CD8-positive, alpha-beta T cell (primary cell): ENCODE measurements at regions of chr3 and their contacts with region 1.

Region 1: DNA sequence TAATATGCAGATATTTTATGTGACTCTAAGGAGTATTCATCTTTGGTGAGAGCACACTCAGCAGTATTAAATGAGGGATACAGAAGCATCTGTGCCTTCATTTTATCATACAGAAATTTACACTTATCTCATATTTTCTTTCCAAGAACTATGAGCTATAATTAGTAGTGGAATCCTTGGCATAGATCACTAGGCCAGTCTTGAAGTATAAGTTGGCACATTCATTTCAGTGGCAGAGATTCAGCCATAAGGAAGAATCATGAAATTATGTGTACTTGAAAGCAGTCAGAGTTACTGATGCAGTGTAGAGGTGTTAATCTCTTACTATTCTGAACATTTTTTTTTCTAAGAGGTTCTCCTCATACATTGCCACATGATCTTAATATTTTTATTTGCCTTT is 393.6 kb upstream of the GOLIM4 start:
- DNase-seq: no peak
- ATAC-seq: no peak
- H3K4me3 ChIP-seq: no peak overlapping the region
- H3K4me3 Mint-ChIP-seq: no peak overlapping the region
- H3K27ac ChIP-seq: no peak overlapping the region
- H3K27ac Mint-ChIP-seq: no peak overlapping the region
- H3K4me1 ChIP-seq: no peaks in the 10 kb centered on the region
- H3K4me1 Mint-ChIP-seq: no peaks in the 10 kb centered on the region
- H3K27me3 ChIP-seq: no peaks in the 10 kb centered on the region
- H3K27me3 Mint-ChIP-seq: no peaks in the 10 kb centered on the region
- CTCF ChIP-seq: no peak

Region 2: DNA sequence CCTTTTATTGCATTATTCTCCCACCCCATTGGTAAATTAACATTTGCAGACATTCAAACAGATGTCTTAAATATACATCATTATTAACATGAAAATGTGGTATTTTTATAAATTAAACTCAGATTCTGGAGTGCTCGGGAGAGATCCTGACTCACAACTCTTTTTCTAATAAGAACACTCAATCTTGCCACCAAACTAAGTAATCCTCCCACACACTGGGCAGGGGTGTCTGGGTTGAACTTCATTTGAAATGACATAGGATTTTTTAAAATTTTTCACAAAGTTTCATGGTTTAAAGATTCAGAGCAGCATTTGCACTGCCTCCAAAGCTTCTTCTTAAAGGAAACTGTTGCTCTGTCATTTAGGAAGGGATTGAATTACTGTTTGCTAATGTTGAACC is 420.0 kb after region 1 on chr3:
- CTCF ChIA-PET with region 1: no interaction called
- POLR2A ChIA-PET with region 1: no interaction called
- intact Hi-C with region 1: loop called in 1 of 2 experiments (anchors 10 kb)
- DNase-seq: no peak
- ATAC-seq: no peak
- H3K4me3 ChIP-seq: no peak overlapping the region
- H3K4me3 Mint-ChIP-seq: no peak overlapping the region
- H3K27ac ChIP-seq: no peak overlapping the region
- H3K27ac Mint-ChIP-seq: no peak overlapping the region
- H3K4me1 ChIP-seq: no peaks in the 10 kb centered on the region
- H3K4me1 Mint-ChIP-seq: no peaks in the 10 kb centered on the region
- H3K27me3 ChIP-seq: no peaks in the 10 kb centered on the region
- H3K27me3 Mint-ChIP-seq: no peaks in the 10 kb centered on the region
- CTCF ChIP-seq: no peak